Caco-2 (cell line): ENCODE measurements at regions of chr5 and their contacts with region 1.

Region 1: GRCh38 chr5:80093796-80094195 is 58.6 kb downstream of the THBS4 start:
- DNase-seq: peak; percentile 92 to 96
- H3K4me3 ChIP-seq: no peak overlapping the region
- H3K4me3 Mint-ChIP-seq: peak overlapping the region; percentile 44
- H3K27ac Mint-ChIP-seq: peak overlapping the region; percentile 94
- H3K4me1 ChIP-seq: peaks cover 68% of the 10 kb centered on the region
- H3K4me1 Mint-ChIP-seq: peaks cover 43% of the 10 kb centered on the region
- H3K27me3 ChIP-seq: no peaks in the 10 kb centered on the region
- H3K27me3 Mint-ChIP-seq: no peaks in the 10 kb centered on the region
- CTCF ChIP-seq: peak; percentile 51 to 54

Region 2: DNA sequence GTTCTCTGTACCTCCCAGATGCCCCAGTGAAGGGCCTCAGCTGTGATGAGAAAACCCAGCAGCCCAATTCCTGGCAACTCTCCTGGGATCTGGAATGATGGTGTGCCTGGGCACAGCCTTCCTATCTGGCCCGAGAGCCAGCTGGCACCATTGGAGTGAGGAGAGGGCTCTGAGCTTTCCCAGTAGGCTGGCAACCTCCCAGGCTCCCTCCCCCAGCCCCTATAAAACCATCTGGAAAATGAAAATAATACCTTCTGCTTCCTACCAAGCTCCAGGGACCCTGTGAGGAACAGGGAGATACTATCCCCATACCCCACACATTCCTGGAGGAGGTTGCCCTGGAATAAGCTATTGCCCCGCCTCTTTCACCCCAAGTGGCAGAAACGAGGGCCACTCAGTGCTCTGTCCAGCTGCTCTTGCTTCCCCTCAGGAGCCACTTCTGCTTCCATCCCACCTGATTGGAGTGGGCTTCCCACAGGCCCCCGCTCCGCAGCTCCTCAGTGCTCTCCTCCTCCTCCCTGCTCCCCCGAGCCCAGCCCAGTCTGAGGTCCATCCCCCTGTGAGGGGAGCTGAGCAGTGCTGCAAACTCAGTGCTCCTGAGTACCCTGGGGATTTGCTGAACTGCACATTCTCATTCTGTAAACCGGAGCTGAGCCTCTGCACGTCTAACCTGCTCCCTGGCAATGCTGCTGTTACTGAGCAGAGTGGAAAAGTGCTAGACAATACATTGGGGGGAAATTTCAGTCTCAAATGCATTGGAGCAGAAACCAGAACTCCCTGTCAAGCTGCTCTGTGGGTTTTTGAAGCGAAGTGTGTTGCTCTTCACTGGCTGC is 16.1 kb after region 1 on chr5:
- CTCF ChIA-PET with region 1: interaction called, 5 read pairs
- POLR2A ChIA-PET with region 1: interaction called, 8 read pairs
- intact Hi-C with region 1: loop called (anchors 1 kb)
- DNase-seq: no peak
- H3K4me3 ChIP-seq: no peak overlapping the region
- H3K4me3 Mint-ChIP-seq: peak overlapping the region; percentile 12
- H3K27ac Mint-ChIP-seq: peak overlapping the region; percentile 91
- H3K4me1 ChIP-seq: peaks cover 52% of the 10 kb centered on the region
- H3K4me1 Mint-ChIP-seq: peaks cover 83% of the 10 kb centered on the region
- H3K27me3 ChIP-seq: no peaks in the 10 kb centered on the region
- H3K27me3 Mint-ChIP-seq: no peaks in the 10 kb centered on the region
- CTCF ChIP-seq: no peak

Region 3: DNA sequence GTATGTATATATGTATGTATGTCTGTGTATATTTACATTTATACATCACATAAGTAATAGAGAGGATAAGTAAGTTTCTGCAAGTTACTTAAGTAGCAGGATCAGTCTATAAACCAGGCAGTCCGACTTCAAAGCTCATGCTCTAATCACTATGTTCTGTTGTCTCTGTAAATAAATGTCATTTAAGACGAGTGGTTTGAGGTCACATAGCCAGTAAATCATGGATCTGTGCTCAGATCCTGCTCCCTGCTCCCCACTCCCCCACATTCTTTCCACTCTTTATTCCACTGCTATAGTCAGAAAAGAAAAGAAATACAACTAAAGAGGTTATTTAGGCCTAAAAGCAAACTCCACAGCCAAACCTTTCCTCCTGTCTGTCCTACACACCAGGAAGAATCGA is 71.7 kb after region 1 on chr5:
- CTCF ChIA-PET with region 1: interaction called, 15 read pairs
- POLR2A ChIA-PET with region 1: no interaction called
- intact Hi-C with region 1: loop called (anchors 1 kb)
- DNase-seq: peak; percentile 60 to 64
- H3K4me3 ChIP-seq: no peak overlapping the region
- H3K4me3 Mint-ChIP-seq: peak overlapping the region; percentile 27
- H3K27ac Mint-ChIP-seq: peak overlapping the region; percentile 70
- H3K4me1 ChIP-seq: peaks cover 47% of the 10 kb centered on the region
- H3K4me1 Mint-ChIP-seq: peaks cover 66% of the 10 kb centered on the region
- H3K27me3 ChIP-seq: no peaks in the 10 kb centered on the region
- H3K27me3 Mint-ChIP-seq: no peaks in the 10 kb centered on the region
- CTCF ChIP-seq: no peak

Region 4: DNA sequence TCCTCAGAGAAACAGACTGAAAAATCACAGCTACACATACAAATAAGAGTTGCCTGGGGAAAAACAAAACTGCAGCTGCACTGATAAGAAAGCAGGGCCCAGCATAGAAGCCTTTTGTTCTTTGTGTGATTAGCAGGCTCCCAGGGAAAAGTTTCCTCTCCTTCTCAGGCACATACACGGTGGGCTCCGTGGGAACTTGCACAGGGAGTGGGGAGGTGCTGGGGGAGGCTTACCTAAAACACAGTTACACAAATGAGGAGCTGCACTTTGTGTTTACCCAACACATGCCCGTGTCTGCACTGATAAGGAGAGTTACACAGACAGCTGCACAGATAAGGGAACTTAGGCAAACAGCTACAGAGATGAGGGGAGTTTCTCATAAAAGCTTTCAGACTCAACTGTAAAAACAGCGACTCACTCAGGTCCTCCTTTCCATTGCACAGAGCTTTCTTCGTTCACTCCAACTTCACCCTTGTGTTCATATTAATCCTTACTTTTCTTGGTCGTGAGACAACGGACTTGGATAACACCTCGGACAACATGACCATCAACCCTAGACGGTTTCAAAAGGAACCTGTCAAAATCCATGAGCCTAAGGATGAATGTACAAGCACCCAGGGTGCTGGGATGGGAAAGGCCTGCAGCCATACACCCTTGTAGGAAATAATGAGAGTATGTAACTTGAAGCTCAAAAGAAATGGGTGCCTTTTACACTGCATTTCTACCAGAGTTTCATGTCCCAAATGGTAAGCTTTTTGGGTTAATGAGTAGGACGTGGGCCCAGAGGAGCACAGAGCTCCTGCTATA is 111.2 kb after region 1 on chr5:
- CTCF ChIA-PET with region 1: interaction called, 26 read pairs
- POLR2A ChIA-PET with region 1: interaction called, 8 read pairs
- intact Hi-C with region 1: loop called (anchors 1 kb)
- DNase-seq: peak; percentile 87 to 92
- H3K4me3 ChIP-seq: no peak overlapping the region
- H3K4me3 Mint-ChIP-seq: peak overlapping the region; percentile 15
- H3K27ac Mint-ChIP-seq: peak overlapping the region; percentile 71
- H3K4me1 ChIP-seq: peaks cover 33% of the 10 kb centered on the region
- H3K4me1 Mint-ChIP-seq: peaks cover 42% of the 10 kb centered on the region
- H3K27me3 ChIP-seq: no peaks in the 10 kb centered on the region
- H3K27me3 Mint-ChIP-seq: no peaks in the 10 kb centered on the region
- CTCF ChIP-seq: peak; percentile 27 to 70

Region 5: GRCh38 chr5:80275347-80275746 is 181.6 kb after region 1 on chr5:
- CTCF ChIA-PET with region 1: interaction called, 11 read pairs
- POLR2A ChIA-PET with region 1: no interaction called
- intact Hi-C with region 1: loop called (anchors 1 kb)
- DNase-seq: peak in 1 of 2 experiments; percentile 43
- H3K4me3 ChIP-seq: no peak overlapping the region
- H3K4me3 Mint-ChIP-seq: no peak overlapping the region
- H3K27ac Mint-ChIP-seq: no peak overlapping the region
- H3K4me1 ChIP-seq: no peaks in the 10 kb centered on the region
- H3K4me1 Mint-ChIP-seq: peaks cover 7% of the 10 kb centered on the region
- H3K27me3 ChIP-seq: no peaks in the 10 kb centered on the region
- H3K27me3 Mint-ChIP-seq: no peaks in the 10 kb centered on the region
- CTCF ChIP-seq: peak; percentile 53 to 62

Region 6: GRCh38 chr5:80407735-80408482 is 314.1 kb after region 1 on chr5 and contains the start of gene ZFYVE16:
- CTCF ChIA-PET with region 1: interaction called, 5 read pairs
- POLR2A ChIA-PET with region 1: interaction called, 9 read pairs
- intact Hi-C with region 1: loop called (anchors 5 kb)
- DNase-seq: peak; percentile 98 to 99
- H3K4me3 ChIP-seq: peak within 1 kb of the TSS; percentile 57
- H3K4me3 Mint-ChIP-seq: peak within 1 kb of the TSS; percentile 75
- H3K27ac Mint-ChIP-seq: peak within 1 kb of the TSS; percentile 66
- H3K4me1 ChIP-seq: peaks cover 4% of the 10 kb centered on the region; the same call in 1 of the 2 replicates
- H3K4me1 Mint-ChIP-seq: peaks cover 7% of the 10 kb centered on the region
- H3K27me3 ChIP-seq: no peaks in the 10 kb centered on the region
- H3K27me3 Mint-ChIP-seq: no peaks in the 10 kb centered on the region
- CTCF ChIP-seq: peak; percentile 39 to 40
- total RNA-seq, gene ZFYVE16: 46.9 and 50.2 TPM in 2 replicates